Common myeloid progenitor, CD34-positive (primary cell): ENCODE measurements at regions of chr14 and their contacts with region 1.

Region 1: DNA sequence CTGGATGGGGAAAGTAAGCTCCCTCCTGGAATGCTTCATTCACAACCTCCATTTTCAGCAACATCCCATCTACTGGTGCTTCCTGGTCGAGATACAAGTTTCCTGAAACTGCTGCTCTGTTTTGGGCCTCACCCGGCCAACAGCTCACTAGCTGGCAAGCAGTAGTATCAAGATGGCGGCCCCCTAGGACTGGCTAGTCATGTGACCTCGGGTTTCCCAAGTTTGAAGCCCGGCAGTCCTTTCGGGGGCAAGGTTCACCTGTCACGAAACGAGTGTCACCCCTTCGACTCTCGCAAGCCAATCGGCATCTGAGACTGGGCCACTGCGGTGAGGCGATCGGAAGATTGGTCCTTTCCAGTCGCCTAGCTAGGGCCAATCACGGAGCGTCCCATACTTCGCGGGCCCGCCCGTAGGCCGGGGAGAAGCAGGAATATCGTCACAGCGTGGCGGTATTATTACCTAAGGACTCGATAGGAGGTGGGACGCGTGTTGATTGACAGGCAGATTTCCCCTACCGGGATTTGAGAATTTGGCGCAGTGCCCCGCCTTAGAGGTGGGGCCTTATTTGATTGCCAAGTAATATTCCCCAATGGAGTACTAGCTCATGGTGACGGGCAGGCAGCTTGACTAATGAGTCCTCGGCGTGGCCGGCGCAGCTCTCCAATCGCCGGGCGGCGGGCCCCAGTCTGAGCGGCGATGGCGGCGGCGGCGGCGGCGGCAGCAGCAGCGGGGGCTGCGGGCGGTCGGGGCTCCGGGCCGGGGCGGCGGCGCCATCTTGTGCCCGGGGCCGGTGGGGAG is at the start of gene PABPN1:
- DNase-seq: peak; percentile 100
- H3K4me3 ChIP-seq: peak within 1 kb of the TSS; percentile 66 to 93 (median 83)
- H3K27ac ChIP-seq: peak within 1 kb of the TSS; percentile 89 to 92
- H3K4me1 ChIP-seq: peaks cover 8 to 25% (median 22%) of the 10 kb centered on the region in 4 experiments
- H3K27me3 ChIP-seq: no peaks in the 10 kb centered on the region

Region 2: GRCh38 chr14:23025151-23025814 is 295.7 kb before region 1 on chr14:
- CTCF ChIA-PET with region 1: no interaction called
- POLR2A ChIA-PET with region 1: no interaction called
- DNase-seq: no peak
- H3K4me3 ChIP-seq: no peak overlapping the region
- H3K27ac ChIP-seq: no peak overlapping the region
- H3K4me1 ChIP-seq: peaks cover 0 to 7% (median 4%) of the 10 kb centered on the region in 4 experiments
- H3K27me3 ChIP-seq: no peaks in the 10 kb centered on the region

Region 3: DNA sequence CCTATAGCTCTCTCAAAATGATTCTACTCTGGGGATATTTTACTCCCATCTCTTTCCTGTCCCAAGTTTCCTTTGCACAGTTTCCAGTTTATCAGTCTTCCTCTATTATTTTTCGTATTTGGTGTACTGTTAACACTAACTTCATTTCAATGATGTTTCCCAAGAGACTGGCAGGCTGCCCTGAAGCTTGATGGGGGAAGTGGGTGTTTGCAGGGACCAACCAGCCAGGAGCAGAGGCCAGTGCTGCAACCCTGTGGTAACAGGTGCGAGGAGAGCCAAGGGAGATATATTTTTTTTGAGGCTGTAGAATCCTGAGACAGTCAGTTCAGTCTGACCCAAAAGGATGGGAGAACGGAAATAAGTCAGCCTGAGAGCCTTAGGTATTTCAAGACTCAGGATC is 190.1 kb before region 1 on chr14:
- CTCF ChIA-PET with region 1: no interaction called
- POLR2A ChIA-PET with region 1: no interaction called
- DNase-seq: peak in 2 of 3 donors; percentile 15 to 26
- H3K4me3 ChIP-seq: no peak overlapping the region
- H3K27ac ChIP-seq: no peak overlapping the region
- H3K4me1 ChIP-seq: peaks cover 0 to 5% (median 2%) of the 10 kb centered on the region in 4 experiments
- H3K27me3 ChIP-seq: no peaks in the 10 kb centered on the region

Region 4: DNA sequence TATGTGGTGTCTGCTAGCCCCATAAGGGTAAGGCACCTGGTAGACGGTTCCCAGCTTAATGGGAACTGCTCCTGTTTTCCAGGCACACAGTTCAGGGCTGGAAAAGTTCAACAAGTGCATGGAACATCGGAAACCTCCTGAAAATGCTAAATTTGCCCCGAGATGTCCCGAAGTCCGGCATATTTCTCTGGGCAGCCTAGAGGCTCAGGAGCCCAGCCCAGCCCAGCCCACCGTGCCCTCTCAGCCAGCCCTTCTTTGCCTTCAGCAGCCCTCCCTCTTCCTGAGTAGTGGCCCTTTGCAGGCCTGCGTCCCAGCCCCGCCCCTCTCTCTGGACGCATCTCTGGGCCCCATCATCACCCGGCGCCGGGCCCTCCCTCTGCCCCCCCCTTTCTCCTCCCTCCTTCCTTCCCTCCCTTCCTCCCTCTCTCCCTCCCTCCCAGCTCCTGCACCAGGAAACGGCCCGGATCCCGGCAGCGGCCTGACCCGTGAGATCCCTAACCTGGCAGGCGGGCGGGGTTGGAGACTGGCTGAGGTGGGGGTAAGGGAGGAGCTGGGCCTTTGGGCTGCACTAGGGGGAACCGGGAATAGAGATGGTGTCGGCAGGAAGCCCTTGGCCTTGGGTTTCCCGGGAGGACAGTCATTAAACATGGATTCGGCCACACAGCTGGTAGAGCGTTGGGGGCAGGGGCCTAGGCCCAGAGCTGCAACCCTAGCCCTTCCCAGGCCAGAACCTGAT is 14.4 kb before region 1 on chr14 and contains the start of gene BCL2L2:
- CTCF ChIA-PET with region 1: interaction called, 177 read pairs
- POLR2A ChIA-PET with region 1: interaction called, 38 read pairs
- DNase-seq: peak; percentile 69 to 82 (median 74)
- H3K4me3 ChIP-seq: peak within 1 kb of the TSS; percentile 57 to 95 (median 77)
- H3K27ac ChIP-seq: peak within 1 kb of the TSS; percentile 72 to 93
- H3K4me1 ChIP-seq: peaks cover 6 to 48% (median 37%) of the 10 kb centered on the region in 4 experiments
- H3K27me3 ChIP-seq: no peaks in the 10 kb centered on the region